Vagina (tissue), 2 donors: ENCODE measurements at regions of chr19 and their contacts with region 1.

Region 1: DNA sequence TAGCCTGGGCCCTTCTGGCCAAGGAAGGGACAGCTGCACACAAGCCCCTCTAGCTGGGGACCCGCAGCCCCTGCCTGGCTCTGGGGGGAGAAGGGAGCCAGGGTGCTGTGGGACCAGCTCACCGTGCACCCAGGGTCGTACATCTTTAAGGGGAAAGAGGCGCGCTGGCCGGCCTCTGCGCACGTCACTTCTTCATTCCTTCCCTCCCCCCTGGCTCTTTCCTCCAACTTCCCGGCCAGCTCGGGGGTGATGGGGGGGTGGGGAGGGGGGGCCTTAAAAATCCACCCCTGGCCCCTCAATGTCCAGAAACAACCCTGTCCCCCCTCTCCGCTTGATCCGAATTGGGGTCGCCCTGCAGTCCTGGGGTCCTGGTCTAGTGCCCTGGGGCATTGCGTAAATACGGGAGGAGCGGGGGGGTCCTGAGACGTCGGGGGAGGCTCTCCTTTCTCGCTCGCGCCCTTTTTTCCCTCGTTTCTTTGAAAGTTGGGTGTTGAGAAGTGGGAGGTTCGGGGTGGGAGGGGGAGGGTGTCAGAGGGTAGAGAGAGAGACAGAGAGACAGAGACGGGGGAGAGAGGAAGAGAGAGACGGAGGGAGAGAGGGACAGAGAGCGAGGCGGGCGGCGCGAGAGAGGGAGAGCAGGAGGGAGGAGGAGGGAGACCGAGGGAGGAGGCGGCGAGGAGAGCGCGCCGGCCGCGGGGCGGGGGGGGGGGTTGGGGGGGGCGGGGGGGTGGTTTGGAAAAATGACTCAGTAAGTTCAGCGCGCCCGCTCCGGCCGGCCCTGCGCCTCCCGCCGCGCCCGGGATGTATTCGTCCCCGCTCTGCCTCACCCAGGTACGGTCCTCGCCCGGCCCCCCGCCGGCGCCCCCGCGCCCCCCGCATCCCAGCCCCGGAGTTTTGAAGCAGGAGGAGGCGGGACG is at the start of gene NFIC:
- DNase-seq: no peak
- H3K4me3 ChIP-seq: peak within 1 kb of the TSS; percentile 66 to 97
- H3K27ac ChIP-seq: peak within 1 kb of the TSS; percentile 100
- H3K4me1 ChIP-seq: peaks cover 86% of the 10 kb centered on the region
- H3K27me3 ChIP-seq: no peaks in the 10 kb centered on the region
- CTCF ChIP-seq: no peak
- POLR2A ChIP-seq: peak in 1 of 2 donors; percentile 23
- total RNA-seq, gene NFIC: 142 TPM

Region 2: GRCh38 chr19:3403489-3404323 is 37.6 kb after region 1 on chr19:
- intact Hi-C with region 1: loop called (anchors 5 kb)
- DNase-seq: peak in 1 of 2 donors; percentile 97
- H3K4me3 ChIP-seq: peak overlapping the region; percentile 46 to 61
- H3K27ac ChIP-seq: peak overlapping the region; percentile 100
- H3K4me1 ChIP-seq: peaks cover 82% of the 10 kb centered on the region
- H3K27me3 ChIP-seq: no peaks in the 10 kb centered on the region
- CTCF ChIP-seq: no peak
- POLR2A ChIP-seq: no peak